ENCODE measurements at regions of chr13 and their contacts with region 1.

Region 1: GRCh38 chr13:106762708-106763107 is 194.8 kb upstream of the ARGLU1 start:
- DNase-seq: no peak
- H3K4me3 ChIP-seq: no peak overlapping the region
- H3K27ac ChIP-seq: no peak overlapping the region
- H3K4me1 ChIP-seq: no peaks in the 10 kb centered on the region
- H3K27me3 ChIP-seq: no peaks in the 10 kb centered on the region
- CTCF ChIP-seq: no peak
- EP300 ChIP-seq: no peak
- POLR2A ChIP-seq: no peak

Region 2: GRCh38 chr13:106709522-106709921 is 53.2 kb before region 1 on chr13:
- in situ Hi-C with region 1: loop called in 1 of 4 experiments (anchors 10 kb)
- intact Hi-C with region 1: no loop called
- DNase-seq: no peak
- H3K4me3 ChIP-seq: no peak overlapping the region
- H3K27ac ChIP-seq: peak overlapping the region in 1 of 4 donors; percentile 52
- H3K4me1 ChIP-seq: peaks cover 0 to 5% (median 0%) of the 10 kb centered on the region in 4 donors
- H3K27me3 ChIP-seq: no peaks in the 10 kb centered on the region
- CTCF ChIP-seq: no peak
- EP300 ChIP-seq: no peak
- POLR2A ChIP-seq: no peak

Region 3: DNA sequence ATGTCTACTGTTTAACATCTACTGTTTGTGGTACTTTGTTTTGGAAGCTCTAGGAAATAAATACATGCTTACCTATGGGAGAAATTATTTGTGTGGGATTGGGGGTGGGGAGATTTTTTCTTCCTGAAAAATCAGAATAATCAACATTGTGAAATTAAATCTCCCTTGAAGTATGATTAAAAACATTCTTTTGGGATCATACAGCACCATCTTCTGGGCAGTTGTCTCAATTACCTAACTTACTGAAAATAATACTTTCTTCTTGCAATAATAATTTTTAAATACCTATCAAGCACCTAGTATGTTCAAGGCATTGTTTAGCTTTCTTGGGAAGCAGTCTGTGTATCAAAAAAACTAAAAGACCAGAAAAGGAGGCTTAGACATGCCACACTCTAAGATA is 381.7 kb after region 1 on chr13:
- in situ Hi-C with region 1: no loop called
- intact Hi-C with region 1: no loop called
- DNase-seq: no peak
- H3K4me3 ChIP-seq: no peak overlapping the region
- H3K27ac ChIP-seq: no peak overlapping the region
- H3K4me1 ChIP-seq: no peaks in the 10 kb centered on the region
- H3K27me3 ChIP-seq: no peaks in the 10 kb centered on the region
- CTCF ChIP-seq: no peak
- EP300 ChIP-seq: no peak
- POLR2A ChIP-seq: no peak

Measured in transverse colon (tissue), 4 donors.